ENCODE measurements at regions of chr20 and their contacts with region 1.

Region 1: DNA sequence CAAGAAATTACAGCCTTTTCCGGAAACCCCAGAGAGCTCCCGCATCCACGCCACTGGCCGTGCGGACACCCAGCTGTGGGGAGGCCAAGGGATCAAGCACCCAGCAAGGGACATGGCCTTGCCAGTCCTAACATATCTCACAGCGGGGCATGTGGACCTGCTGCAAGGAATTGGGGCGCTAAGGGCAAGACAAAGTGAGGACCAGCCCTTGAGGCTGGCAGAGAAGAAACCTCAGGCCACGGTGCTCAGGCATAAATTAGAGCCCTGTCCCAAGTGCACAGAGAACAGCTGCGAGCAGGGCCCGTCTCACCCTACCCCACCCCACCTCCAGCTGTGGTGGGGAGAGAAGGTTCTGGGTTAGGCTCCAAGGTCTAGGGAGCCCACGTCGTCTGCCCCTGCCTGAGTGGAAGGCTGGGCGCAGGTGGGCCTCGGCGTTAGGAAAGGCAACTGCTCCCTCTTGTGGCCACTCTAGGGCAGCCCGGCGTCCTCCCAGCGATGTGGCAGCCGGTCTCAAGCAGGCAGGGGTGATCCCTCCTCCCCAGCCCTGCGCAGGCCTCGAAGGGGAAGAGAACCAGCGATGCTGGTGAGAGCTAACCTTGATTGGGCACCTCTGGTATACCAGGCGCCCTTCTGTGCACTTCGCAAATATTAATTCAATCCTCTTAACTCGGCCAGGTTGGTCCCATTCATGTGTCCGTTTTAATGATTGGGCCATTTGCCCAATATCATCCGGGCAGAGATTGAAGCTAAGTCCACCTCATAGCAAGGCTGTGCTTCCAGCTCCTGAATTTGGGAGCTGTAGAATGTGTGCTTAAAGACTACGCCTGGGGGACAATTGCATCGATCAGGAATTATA is 235.8 kb downstream of the NFATC2 start:
- DNase-seq: peak; percentile 66 to 78
- ATAC-seq: peak; percentile 98 to 100
- H3K4me3 ChIP-seq: no peak overlapping the region
- H3K27ac ChIP-seq: peak overlapping the region; percentile 26 to 41; a peak in 4 of 6 replicates
- H3K4me1 ChIP-seq: 0 out of 3 replicates have a peak, but pooled peaks cover 3% of the 10 kb centered on the region
- CTCF ChIP-seq: peak; percentile 94
- EP300 ChIP-seq: no peak
- POLR2A ChIP-seq: no peak
- RAD21 ChIP-seq: peak; percentile 95 to 97

Region 2: DNA sequence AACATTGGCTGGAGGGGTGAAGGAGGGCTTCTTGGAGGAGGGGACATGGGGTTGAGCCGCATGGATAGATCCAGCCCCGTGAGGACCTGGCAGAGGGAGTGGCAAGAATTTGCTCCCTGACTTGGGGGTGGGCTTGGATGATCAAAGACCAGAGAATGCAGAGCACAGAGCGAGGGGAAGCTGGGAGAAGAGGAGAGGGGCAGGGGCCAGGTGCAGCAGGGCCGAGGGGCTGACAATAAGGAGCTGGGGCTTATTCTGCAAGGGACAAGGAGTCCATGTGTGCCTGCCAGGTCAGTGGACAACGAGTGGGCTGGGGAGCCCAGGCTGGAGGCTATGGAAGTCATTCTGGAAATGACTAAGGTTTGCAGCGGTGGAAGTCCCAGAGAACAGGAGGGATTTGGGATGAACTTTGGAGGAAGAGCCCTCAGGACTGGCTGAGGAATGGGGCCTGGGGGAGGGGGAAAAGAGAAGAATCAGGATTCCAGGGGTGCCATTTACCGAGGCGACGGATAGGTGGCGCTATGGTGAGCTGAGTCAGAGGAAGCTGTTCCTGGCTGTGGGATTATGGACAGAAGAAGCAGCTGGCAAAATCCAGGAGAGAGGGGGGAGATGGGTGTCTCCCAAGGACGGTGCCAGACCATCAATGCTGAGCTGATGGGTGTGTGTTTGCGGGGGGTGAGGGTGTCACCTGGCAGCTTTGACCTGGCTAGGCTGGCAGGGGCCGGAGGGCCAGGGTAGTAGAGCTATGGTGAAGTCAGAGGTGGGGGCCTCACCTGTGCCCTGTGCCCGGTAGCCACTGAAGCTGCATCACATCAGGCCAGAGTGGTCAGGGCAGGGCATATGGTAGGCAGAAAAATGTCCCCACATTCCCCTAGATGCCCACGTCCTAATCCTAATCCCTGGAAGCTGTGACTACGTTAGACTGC is 291.7 kb before region 1 on chr20:
- CTCF ChIA-PET with region 1: interaction called, 45 read pairs
- POLR2A ChIA-PET with region 1: no interaction called
- DNase-seq: peak; percentile 59 to 84
- ATAC-seq: peak; percentile 67 to 85; a peak in 5 of 6 replicates
- H3K4me3 ChIP-seq: no peak overlapping the region
- H3K27ac ChIP-seq: no peak overlapping the region
- H3K4me1 ChIP-seq: no peaks in the 10 kb centered on the region
- CTCF ChIP-seq: peak; percentile 65
- EP300 ChIP-seq: no peak
- POLR2A ChIP-seq: no peak
- RAD21 ChIP-seq: peak; percentile 43 to 59; a peak in 4 of 5 replicates

Region 3: GRCh38 chr20:51255417-51255816 is 51.3 kb before region 1 on chr20:
- CTCF ChIA-PET with region 1: interaction called, 15 read pairs
- POLR2A ChIA-PET with region 1: no interaction called
- DNase-seq: no peak
- ATAC-seq: no peak
- H3K4me3 ChIP-seq: no peak overlapping the region
- H3K27ac ChIP-seq: no peak overlapping the region
- H3K4me1 ChIP-seq: 0 out of 3 replicates have a peak, but pooled peaks cover 2% of the 10 kb centered on the region
- CTCF ChIP-seq: no peak
- EP300 ChIP-seq: no peak
- POLR2A ChIP-seq: no peak
- RAD21 ChIP-seq: no peak

Region 4: GRCh38 chr20:51287592-51288378 is 18.9 kb before region 1 on chr20:
- CTCF ChIA-PET with region 1: interaction called, 15 read pairs
- POLR2A ChIA-PET with region 1: no interaction called
- DNase-seq: no peak
- ATAC-seq: no peak
- H3K4me3 ChIP-seq: no peak overlapping the region
- H3K27ac ChIP-seq: no peak overlapping the region
- H3K4me1 ChIP-seq: no peaks in the 10 kb centered on the region
- CTCF ChIP-seq: no peak
- EP300 ChIP-seq: no peak
- POLR2A ChIP-seq: no peak
- RAD21 ChIP-seq: no peak

Region 5: GRCh38 chr20:51326201-51326819 is 19.6 kb after region 1 on chr20:
- CTCF ChIA-PET with region 1: interaction called, 94 read pairs
- POLR2A ChIA-PET with region 1: no interaction called
- DNase-seq: peak; percentile 66 to 73
- ATAC-seq: peak; percentile 55 to 85; a peak in 3 of 6 replicates
- H3K4me3 ChIP-seq: no peak overlapping the region
- H3K27ac ChIP-seq: no peak overlapping the region
- H3K4me1 ChIP-seq: no peaks in the 10 kb centered on the region
- CTCF ChIP-seq: peak; percentile 54
- EP300 ChIP-seq: no peak
- POLR2A ChIP-seq: no peak
- RAD21 ChIP-seq: peak; percentile 38 to 42; a peak in 3 of 5 replicates

Region 6: GRCh38 chr20:51345601-51346101 is 38.9 kb after region 1 on chr20:
- CTCF ChIA-PET with region 1: interaction called, 16 read pairs
- POLR2A ChIA-PET with region 1: no interaction called
- DNase-seq: peak; percentile 24 to 60
- ATAC-seq: peak; percentile 70 to 82
- H3K4me3 ChIP-seq: no peak overlapping the region
- H3K27ac ChIP-seq: peak overlapping the region; percentile 76 to 81
- H3K4me1 ChIP-seq: peaks cover 27% of the 10 kb centered on the region
- CTCF ChIP-seq: no peak
- EP300 ChIP-seq: peak; percentile 27 to 52; a peak in 2 of 5 replicates
- POLR2A ChIP-seq: no peak
- RAD21 ChIP-seq: no peak